ENCODE measurements at regions of chr11 and their contacts with region 1.

Region 1: DNA sequence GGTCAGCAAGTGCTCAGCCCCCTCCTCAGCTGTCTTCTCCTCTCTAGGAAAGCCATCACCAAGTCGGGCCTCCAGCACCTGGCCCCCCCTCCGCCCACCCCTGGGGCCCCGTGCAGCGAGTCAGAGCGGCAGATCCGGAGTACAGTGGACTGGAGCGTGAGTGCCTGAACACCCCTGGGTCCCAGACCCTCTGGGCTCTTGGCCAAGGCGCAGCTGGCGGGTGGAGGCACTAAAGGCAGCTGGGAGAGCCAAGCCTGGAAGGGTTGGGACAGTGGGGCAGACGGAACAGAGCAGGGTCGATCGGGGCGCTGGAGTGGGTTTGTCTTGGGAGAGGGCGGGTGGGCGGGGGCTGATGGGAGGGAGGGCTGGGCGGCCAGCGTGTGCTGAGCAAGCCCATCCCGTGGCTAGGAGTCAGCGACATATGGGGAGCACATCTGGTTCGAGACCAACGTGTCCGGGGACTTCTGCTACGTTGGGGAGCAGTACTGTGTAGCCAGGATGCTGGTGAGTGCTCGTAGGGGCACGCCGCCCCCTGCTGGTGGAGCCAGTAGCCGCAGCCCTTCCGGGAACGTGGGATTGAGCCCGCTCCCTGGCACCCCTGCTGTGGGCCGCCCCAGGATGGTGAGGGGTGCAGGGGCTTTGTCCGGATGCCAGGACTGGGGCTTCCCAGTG is 14.1 kb upstream of the MDK start:
- DNase-seq: peak; percentile 65 to 84 (median 77)
- ATAC-seq: peak; percentile 86
- H3K4me3 ChIP-seq: no peak overlapping the region
- H3K4me3 Mint-ChIP-seq: peak overlapping the region in 5 of 10 donors; percentile 21 to 50 (median 45)
- H3K27ac ChIP-seq: peak overlapping the region; percentile 30
- H3K27ac Mint-ChIP-seq: peak overlapping the region in 5 of 9 donors; percentile 17 to 83 (median 63)
- H3K4me1 ChIP-seq: peaks cover 6 to 25% of the 10 kb centered on the region in 2 donors
- H3K4me1 Mint-ChIP-seq: peaks cover 20 to 52% (median 38%) of the 10 kb centered on the region in 7 donors
- H3K27me3 ChIP-seq: no peaks in the 10 kb centered on the region
- H3K27me3 Mint-ChIP-seq: no peaks in the 10 kb centered on the region

Region 2: DNA sequence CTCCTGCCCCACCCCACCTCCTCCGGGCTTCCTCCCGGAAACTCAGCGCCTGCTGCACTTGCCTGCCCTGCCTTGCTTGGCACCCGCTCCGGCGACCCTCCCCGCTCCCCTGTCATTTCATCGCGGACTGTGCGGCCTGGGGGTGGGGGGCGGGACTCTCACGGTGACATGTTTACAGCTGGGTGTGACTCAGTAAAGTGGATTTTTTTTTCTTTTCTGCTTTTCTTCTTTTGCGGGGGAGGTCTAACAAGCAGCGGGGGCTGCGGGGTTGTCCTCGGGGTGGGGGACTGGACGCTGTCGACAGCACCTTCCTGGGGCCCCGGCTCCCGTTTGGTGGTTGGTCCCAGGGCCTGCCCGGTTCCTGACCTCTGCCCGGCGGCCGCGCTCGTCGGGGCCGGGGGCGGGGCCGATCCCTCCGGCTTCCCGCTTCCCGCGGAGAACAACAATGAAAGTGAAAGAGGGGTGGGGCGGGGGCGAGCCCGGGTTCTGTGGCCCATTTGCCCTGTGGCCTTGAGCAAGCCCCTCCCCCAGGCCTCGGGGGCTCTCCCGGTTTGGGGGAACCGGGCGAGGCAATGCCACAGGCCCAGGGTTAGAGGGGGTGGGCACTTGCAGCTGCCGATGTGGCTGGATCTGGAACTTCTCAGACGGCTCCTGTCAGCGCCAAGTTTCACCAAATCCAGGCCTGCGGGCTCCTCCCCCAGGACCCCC is 13.1 kb after region 1 on chr11:
- CTCF ChIA-PET with region 1: interaction called, 5 read pairs
- POLR2A ChIA-PET with region 1: no interaction called
- intact Hi-C with region 1: loop called in 1 of 2 experiments (anchors 1 kb)
- DNase-seq: peak in 5 of 9 donors; percentile 29 to 76 (median 44)
- ATAC-seq: peak; percentile 57
- H3K4me3 ChIP-seq: peak overlapping the region; percentile 67
- H3K4me3 Mint-ChIP-seq: peak overlapping the region; percentile 68 to 87 (median 79)
- H3K27ac ChIP-seq: peak overlapping the region; percentile 75
- H3K27ac Mint-ChIP-seq: peak overlapping the region in 8 of 9 donors; percentile 63 to 88 (median 78)
- H3K4me1 ChIP-seq: peaks cover 8% of the 10 kb centered on the region in 2 donors
- H3K4me1 Mint-ChIP-seq: peaks cover 0 to 13% (median 10%) of the 10 kb centered on the region in 7 donors
- H3K27me3 ChIP-seq: peaks cover 0 to 4% of the 10 kb centered on the region in 2 donors
- H3K27me3 Mint-ChIP-seq: peaks cover 0 to 22% (median 7%) of the 10 kb centered on the region in 5 donors